ENCODE measurements at regions of chr4 and their contacts with region 1.

Region 1: DNA sequence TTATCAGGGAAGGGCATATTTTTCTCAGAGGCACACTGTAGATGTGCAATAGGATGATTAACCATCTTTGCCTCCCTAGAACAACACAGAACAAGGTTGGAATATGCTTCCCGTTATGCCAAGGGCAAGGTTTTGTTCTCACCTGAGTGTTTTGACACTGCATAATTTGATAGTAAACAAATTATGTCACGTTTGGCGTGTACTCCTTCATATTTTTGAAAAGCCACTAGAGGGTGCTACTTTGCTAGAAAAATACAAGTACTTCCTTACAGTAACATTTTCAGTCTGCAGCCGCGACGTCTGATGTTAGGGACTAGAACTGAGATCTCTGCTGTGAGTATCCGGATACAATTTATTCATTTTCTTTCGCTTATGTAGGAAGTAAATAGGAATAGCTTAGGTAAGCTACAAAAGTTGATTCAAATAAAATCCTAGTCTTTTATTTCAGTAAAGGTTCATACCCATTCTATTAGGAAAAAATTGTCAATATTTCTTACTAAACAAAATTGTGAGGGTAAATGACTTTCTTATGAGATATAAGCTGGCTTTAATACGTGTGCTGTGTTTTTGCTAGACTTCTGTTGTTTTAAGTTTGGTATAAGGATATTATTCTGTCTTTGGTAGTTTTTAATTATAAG is 181.1 kb upstream of the WDFY3 start:
- DNase-seq: peak; percentile 8
- H3K4me3 Mint-ChIP-seq: no peak overlapping the region
- H3K27ac Mint-ChIP-seq: no peak overlapping the region
- H3K4me1 Mint-ChIP-seq: no peaks in the 10 kb centered on the region
- H3K27me3 Mint-ChIP-seq: no peaks in the 10 kb centered on the region
- CTCF ChIP-seq: peak; percentile 17

Region 2: GRCh38 chr4:84971319-84971932 is 176.1 kb before region 1 on chr4:
- CTCF ChIA-PET with region 1: no interaction called
- intact Hi-C with region 1: no loop called
- DNase-seq: no peak
- H3K4me3 Mint-ChIP-seq: no peak overlapping the region
- H3K27ac Mint-ChIP-seq: no peak overlapping the region
- H3K4me1 Mint-ChIP-seq: peaks cover 8% of the 10 kb centered on the region
- H3K27me3 Mint-ChIP-seq: no peaks in the 10 kb centered on the region
- CTCF ChIP-seq: no peak

Region 3: GRCh38 chr4:85291226-85291625 is 143.7 kb after region 1 on chr4:
- CTCF ChIA-PET with region 1: no interaction called
- intact Hi-C with region 1: no loop called
- DNase-seq: no peak
- H3K4me3 Mint-ChIP-seq: no peak overlapping the region
- H3K27ac Mint-ChIP-seq: no peak overlapping the region
- H3K4me1 Mint-ChIP-seq: no peaks in the 10 kb centered on the region
- H3K27me3 Mint-ChIP-seq: no peaks in the 10 kb centered on the region
- CTCF ChIP-seq: no peak

Region 4: GRCh38 chr4:85318415-85318814 is 170.9 kb after region 1 on chr4:
- CTCF ChIA-PET with region 1: no interaction called
- intact Hi-C with region 1: loop called (anchors 5 kb)
- DNase-seq: no peak
- H3K4me3 Mint-ChIP-seq: no peak overlapping the region
- H3K27ac Mint-ChIP-seq: no peak overlapping the region
- H3K4me1 Mint-ChIP-seq: no peaks in the 10 kb centered on the region
- H3K27me3 Mint-ChIP-seq: no peaks in the 10 kb centered on the region
- CTCF ChIP-seq: no peak

Region 5: GRCh38 chr4:85370430-85371032 is 223.0 kb after region 1 on chr4:
- CTCF ChIA-PET with region 1: interaction called, 5 read pairs
- intact Hi-C with region 1: loop called (anchors 1 kb)
- DNase-seq: peak; percentile 44
- H3K4me3 Mint-ChIP-seq: no peak overlapping the region
- H3K27ac Mint-ChIP-seq: no peak overlapping the region
- H3K4me1 Mint-ChIP-seq: no peaks in the 10 kb centered on the region
- H3K27me3 Mint-ChIP-seq: peaks cover 4% of the 10 kb centered on the region
- CTCF ChIP-seq: peak; percentile 64

Region 6: DNA sequence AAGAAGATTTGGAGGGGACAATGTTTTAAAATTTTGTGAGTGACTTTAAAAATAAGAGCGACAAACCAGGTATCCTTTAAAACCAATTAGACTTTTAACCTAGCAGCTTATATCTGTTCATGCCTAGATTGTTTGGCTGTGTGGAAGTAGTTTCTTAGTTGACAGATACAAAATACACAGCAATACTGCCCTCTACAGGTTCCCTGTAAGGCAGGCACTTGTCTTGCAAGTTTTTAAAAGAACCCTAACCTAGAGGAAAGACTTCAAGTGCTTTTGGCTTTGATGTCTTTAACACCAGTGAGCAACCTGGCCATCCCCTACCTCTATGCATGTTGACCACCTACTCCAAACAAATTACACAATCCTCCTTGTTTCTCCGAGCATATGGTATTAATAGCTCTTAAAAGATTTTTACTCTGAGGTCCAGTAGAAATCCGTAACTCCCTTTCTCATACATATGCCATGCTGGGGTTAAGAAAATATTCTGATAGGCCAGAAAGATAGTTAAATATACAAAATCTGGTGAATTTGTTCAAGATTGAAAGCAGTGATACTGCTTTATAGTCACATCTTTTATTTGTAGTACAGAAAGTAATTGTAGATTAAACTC is 600.4 kb after region 1 on chr4:
- CTCF ChIA-PET with region 1: interaction called, 3 read pairs
- intact Hi-C with region 1: loop called (anchors 5 kb)
- DNase-seq: peak; percentile 28
- H3K4me3 Mint-ChIP-seq: no peak overlapping the region
- H3K27ac Mint-ChIP-seq: no peak overlapping the region
- H3K4me1 Mint-ChIP-seq: no peaks in the 10 kb centered on the region
- H3K27me3 Mint-ChIP-seq: no peaks in the 10 kb centered on the region
- CTCF ChIP-seq: peak; percentile 38